Spleen (tissue), 13 donors: ENCODE measurements at regions of chr17 and their contacts with region 1.

Region 1: GRCh38 chr17:13594762-13595598 is 6.7 kb downstream of the HS3ST3A1 start:
- DNase-seq: no peak
- H3K4me3 ChIP-seq: no peak overlapping the region
- H3K27ac ChIP-seq: peak overlapping the region in 3 of 8 donors; percentile 5 to 45 (median 27)
- H3K4me1 ChIP-seq: peaks cover 0 to 55% (median 12%) of the 10 kb centered on the region in 6 donors
- H3K27me3 ChIP-seq: peaks cover 0 to 21% (median 6%) of the 10 kb centered on the region in 7 donors
- CTCF ChIP-seq: peak; percentile 60 to 92 (median 85)
- POLR2A ChIP-seq: no peak

Region 2: GRCh38 chr17:14926526-14927122 is 1331.6 kb after region 1 on chr17:
- intact Hi-C with region 1: loop called (anchors 5 kb)
- DNase-seq: no peak
- H3K4me3 ChIP-seq: no peak overlapping the region
- H3K27ac ChIP-seq: no peak overlapping the region
- H3K4me1 ChIP-seq: peaks cover 0 to 6% (median 0%) of the 10 kb centered on the region in 6 donors
- H3K27me3 ChIP-seq: peaks cover 0 to 26% (median 0%) of the 10 kb centered on the region in 7 donors
- CTCF ChIP-seq: peak; percentile 19 to 80 (median 68)
- POLR2A ChIP-seq: no peak